K562 (cell line): ENCODE measurements at regions of chr9 and their contacts with region 1.

Region 1: DNA sequence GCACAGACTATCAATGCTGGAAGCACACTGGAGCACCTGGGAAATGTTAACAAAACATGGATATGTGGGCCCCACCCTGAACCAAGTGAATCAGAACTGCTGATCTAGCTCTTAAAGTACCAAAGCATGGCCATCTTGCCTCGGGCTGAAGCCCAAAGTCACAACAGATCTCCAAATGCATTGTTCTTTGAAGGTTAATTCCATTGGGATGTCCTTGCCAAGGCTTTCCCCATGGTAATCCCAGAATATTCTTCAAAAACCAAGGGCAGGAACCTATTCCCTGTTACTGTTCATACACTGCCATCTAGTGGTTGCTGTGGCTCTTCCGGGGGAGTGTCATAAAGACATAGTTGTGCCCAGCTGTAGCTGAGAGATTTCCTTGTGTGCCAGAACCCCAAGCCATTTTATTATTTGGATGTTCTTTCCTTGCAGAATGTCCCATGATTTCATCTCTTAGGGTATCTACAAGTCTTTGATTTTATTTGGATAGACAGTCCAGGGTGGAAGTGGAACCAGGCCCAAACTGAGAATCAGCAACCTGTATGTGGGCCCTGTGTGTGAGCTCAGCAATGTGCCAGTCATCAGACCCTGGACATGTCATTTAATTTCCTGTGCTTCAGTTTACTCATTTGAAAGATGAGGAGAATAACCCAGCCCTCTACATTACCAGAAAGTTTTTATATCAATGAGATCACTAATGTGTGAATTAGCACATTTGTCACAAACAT is 290.0 kb downstream of the ACTL7B start:
- DNase-seq: peak; percentile 67 to 75 (median 70)
- ATAC-seq: peak; percentile 95
- H3K4me3 ChIP-seq: no peak overlapping the region
- H3K27ac ChIP-seq: no peak overlapping the region
- H3K4me1 ChIP-seq: no peaks in the 10 kb centered on the region
- H3K27me3 ChIP-seq: peaks cover 0 to 4% of the 10 kb centered on the region in 2 experiments; a peak in 1 of 5 replicates
- CTCF ChIP-seq: peak; percentile 70 to 86 (median 78)
- EP300 ChIP-seq: no peak
- POLR2A ChIP-seq: no peak
- RAD21 ChIP-seq: peak; percentile 86 to 90

Region 2: DNA sequence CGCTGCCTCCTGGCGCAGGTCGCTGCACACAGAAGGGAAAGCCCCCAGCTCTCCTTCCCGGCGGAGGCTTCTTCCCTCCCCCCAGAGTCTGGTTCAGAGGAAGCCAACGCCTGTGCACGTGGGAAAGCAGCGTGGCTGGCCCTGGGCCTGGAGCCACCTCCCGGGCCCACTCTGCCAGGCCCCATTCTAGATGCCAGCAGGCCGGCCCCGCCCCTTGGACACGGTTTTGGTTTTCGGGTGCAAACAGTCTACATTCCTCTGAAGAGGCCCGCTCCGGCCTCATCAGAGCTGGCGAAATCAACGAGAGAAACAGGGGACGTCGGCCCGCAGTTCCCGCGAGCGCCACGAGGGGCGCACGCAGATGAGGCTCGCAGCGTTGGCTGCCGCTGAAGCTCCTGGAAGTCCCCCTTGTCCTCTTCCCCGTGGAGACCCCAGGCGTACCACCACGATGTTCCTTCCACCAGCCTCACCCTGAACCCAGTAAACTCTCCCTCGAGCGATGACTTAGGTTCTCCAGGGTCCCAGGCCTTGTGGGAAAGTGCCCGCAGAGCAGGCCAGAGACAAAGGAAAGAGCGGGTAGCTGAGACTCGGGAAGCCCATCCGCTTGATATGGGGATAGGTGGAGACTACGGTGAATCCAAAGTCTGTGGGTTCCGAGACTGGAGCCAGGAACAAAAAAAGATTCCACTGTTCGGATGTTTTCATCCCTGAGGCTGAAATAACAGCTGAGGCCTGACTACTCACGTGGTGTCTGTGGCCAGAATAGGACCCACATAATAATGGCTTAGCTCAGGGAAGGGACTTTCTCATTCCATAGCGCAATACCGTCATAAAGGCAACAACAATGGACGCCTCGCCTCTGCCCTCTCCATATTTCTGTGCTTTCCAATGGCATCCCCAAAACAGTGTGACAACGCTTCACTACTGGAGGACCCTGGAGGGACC is 1140.4 kb before region 1 on chr9:
- CTCF ChIA-PET with region 1: interaction called, 6 read pairs
- POLR2A ChIA-PET with region 1: interaction called, 3 read pairs
- in situ Hi-C with region 1: loop called (anchors 10 kb)
- intact Hi-C with region 1: loop called (anchors 1 kb)
- DNase-seq: peak; percentile 54 to 73 (median 66)
- ATAC-seq: peak; percentile 93
- H3K4me3 ChIP-seq: no peak overlapping the region
- H3K27ac ChIP-seq: no peak overlapping the region
- H3K4me1 ChIP-seq: peaks cover 0 to 7% of the 10 kb centered on the region in 2 experiments; a peak in 2 of 5 replicates
- H3K27me3 ChIP-seq: peaks cover 3 to 25% of the 10 kb centered on the region in 2 experiments; a peak in 4 of 5 replicates
- CTCF ChIP-seq: peak; percentile 72 to 93 (median 74); a peak in 5 of 6 replicates
- EP300 ChIP-seq: no peak
- POLR2A ChIP-seq: no peak
- RAD21 ChIP-seq: peak in 1 of 2 experiments; percentile 52; a peak in 2 of 4 replicates

Region 3: DNA sequence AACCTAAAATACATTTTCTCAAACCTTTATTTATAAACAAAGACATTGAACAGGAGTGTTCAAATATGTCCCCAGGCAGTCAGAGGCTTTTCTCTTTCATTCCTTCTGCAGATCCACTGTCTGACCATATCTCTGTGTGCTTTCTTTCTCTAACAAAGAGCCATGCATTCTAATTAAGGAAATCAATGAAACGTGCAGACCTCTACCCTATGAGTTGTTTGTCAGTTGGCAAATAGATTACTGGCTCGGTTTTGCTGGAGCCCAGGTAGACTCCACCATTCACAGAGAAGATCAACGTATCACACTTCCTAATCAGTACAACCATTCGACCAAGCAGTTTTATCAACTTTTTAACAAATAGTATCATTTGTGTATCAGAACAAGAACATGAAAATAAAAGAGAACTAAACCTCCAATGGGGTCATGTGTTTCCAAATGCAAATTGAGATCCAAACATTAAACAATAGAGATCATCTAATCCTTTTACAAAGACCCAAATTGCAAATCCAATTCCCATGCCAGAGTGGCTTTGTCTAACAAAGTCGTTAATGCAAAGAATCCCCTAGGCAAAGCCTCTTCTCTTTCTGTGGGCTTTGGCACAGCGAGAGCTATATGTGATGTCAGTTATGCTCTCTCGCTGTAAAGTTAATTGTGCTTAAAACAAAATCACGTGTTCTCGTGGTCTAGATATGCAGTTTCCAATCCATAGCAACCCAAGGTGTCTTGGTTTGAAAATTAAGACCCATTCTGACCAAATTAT is 1093.1 kb before region 1 on chr9:
- CTCF ChIA-PET with region 1: no interaction called
- POLR2A ChIA-PET with region 1: no interaction called
- in situ Hi-C with region 1: loop called (anchors 10 kb)
- intact Hi-C with region 1: no loop called
- DNase-seq: no peak
- ATAC-seq: no peak
- H3K4me3 ChIP-seq: no peak overlapping the region
- H3K27ac ChIP-seq: no peak overlapping the region
- H3K4me1 ChIP-seq: no peaks in the 10 kb centered on the region
- H3K27me3 ChIP-seq: peaks cover 6 to 13% of the 10 kb centered on the region in 2 experiments; a peak in 4 of 5 replicates
- CTCF ChIP-seq: no peak
- EP300 ChIP-seq: no peak
- POLR2A ChIP-seq: no peak
- RAD21 ChIP-seq: no peak

Region 4: GRCh38 chr9:107484117-107484723 is 1081.6 kb before region 1 on chr9:
- CTCF ChIA-PET with region 1: interaction called, 3 read pairs
- POLR2A ChIA-PET with region 1: no interaction called
- in situ Hi-C with region 1: loop called (anchors 10 kb)
- intact Hi-C with region 1: loop called (anchors 1 kb)
- DNase-seq: peak; percentile 27 to 56 (median 40)
- ATAC-seq: peak; percentile 89
- H3K4me3 ChIP-seq: no peak overlapping the region
- H3K27ac ChIP-seq: no peak overlapping the region
- H3K4me1 ChIP-seq: peaks cover 0 to 11% of the 10 kb centered on the region in 2 experiments; a peak in 3 of 5 replicates
- H3K27me3 ChIP-seq: peaks cover 0 to 7% of the 10 kb centered on the region in 2 experiments; a peak in 1 of 5 replicates
- CTCF ChIP-seq: peak; percentile 31 to 66 (median 53); a peak in 5 of 6 replicates
- EP300 ChIP-seq: no peak
- POLR2A ChIP-seq: no peak
- RAD21 ChIP-seq: peak; percentile 84 to 93

Region 5: DNA sequence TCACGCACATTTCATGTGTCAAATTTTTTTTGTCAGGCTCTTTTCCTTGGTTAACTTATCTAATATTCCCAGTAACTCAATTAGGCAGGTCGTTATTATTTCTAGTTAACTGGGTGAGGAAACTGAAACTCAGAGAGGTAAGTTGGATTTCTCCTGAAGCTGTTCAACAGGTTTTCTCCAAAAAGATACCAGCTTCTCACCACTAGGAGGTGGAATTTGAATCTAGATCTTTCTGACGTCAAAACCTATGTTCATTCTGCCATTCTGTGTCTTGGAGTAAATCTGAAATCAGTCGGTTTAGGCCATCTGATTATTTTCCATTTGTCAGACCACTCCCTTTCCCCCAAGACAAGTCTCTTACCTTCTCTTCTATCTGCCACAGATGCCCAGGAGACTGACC is 282.9 kb before region 1 on chr9:
- CTCF ChIA-PET with region 1: no interaction called
- POLR2A ChIA-PET with region 1: no interaction called
- in situ Hi-C with region 1: no loop called
- intact Hi-C with region 1: loop called (anchors 10 kb)
- DNase-seq: peak in 3 of 4 experiments; percentile 8 to 17 (median 15)
- ATAC-seq: no peak
- H3K4me3 ChIP-seq: no peak overlapping the region
- H3K27ac ChIP-seq: no peak overlapping the region
- H3K4me1 ChIP-seq: peaks cover 0 to 2% of the 10 kb centered on the region in 2 experiments; a peak in 2 of 5 replicates
- H3K27me3 ChIP-seq: no peaks in the 10 kb centered on the region
- CTCF ChIP-seq: peak in 2 of 3 experiments; percentile 44 to 50; a peak in 5 of 6 replicates
- EP300 ChIP-seq: no peak
- POLR2A ChIP-seq: no peak
- RAD21 ChIP-seq: peak in 1 of 2 experiments; percentile 31; a peak in 2 of 4 replicates

Region 6: DNA sequence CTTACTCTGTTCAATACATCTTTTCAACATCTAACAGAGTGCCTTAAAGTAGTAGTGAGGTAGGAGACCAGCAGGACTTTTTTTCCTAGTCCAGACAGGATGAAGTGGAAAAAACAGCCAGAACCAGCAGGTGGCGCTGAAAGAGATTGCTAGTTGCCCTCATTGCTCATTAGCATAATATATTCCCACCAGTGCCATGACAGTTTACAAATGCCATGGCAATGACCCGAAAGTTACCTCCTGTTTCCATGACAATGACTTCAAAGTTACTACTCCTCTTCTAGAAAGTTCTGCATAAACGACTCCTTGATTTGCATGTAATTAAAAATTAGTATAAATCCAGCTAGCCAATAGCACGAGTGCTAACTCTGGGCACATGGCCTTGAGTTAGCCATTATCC is 97.4 kb before region 1 on chr9:
- CTCF ChIA-PET with region 1: no interaction called
- POLR2A ChIA-PET with region 1: no interaction called
- in situ Hi-C with region 1: no loop called
- intact Hi-C with region 1: loop called (anchors 1 kb)
- DNase-seq: peak; percentile 35 to 67 (median 40)
- ATAC-seq: peak; percentile 98
- H3K4me3 ChIP-seq: no peak overlapping the region
- H3K27ac ChIP-seq: no peak overlapping the region
- H3K4me1 ChIP-seq: 0 out of 5 replicates have a peak, but pooled peaks cover 0 to 2% of the 10 kb centered on the region in 2 experiments
- H3K27me3 ChIP-seq: no peaks in the 10 kb centered on the region
- CTCF ChIP-seq: peak; percentile 59 to 72 (median 72)
- EP300 ChIP-seq: no peak
- POLR2A ChIP-seq: no peak
- RAD21 ChIP-seq: peak in 1 of 2 experiments; percentile 32; a peak in 2 of 4 replicates

Region 7: GRCh38 chr9:108761655-108762347 is 196.0 kb after region 1 on chr9:
- CTCF ChIA-PET with region 1: no interaction called
- POLR2A ChIA-PET with region 1: no interaction called
- in situ Hi-C with region 1: no loop called
- intact Hi-C with region 1: loop called (anchors 5 kb)
- DNase-seq: peak; percentile 65 to 81 (median 78)
- ATAC-seq: peak; percentile 94
- H3K4me3 ChIP-seq: no peak overlapping the region
- H3K27ac ChIP-seq: no peak overlapping the region
- H3K4me1 ChIP-seq: no peaks in the 10 kb centered on the region
- H3K27me3 ChIP-seq: peaks cover 2 to 7% of the 10 kb centered on the region in 2 experiments; a peak in 3 of 5 replicates
- CTCF ChIP-seq: peak; percentile 67 to 92 (median 91)
- EP300 ChIP-seq: no peak
- POLR2A ChIP-seq: no peak
- RAD21 ChIP-seq: peak; percentile 70 to 84